ENCODE measurements at regions of chr18 and their contacts with region 1.

Region 1: DNA sequence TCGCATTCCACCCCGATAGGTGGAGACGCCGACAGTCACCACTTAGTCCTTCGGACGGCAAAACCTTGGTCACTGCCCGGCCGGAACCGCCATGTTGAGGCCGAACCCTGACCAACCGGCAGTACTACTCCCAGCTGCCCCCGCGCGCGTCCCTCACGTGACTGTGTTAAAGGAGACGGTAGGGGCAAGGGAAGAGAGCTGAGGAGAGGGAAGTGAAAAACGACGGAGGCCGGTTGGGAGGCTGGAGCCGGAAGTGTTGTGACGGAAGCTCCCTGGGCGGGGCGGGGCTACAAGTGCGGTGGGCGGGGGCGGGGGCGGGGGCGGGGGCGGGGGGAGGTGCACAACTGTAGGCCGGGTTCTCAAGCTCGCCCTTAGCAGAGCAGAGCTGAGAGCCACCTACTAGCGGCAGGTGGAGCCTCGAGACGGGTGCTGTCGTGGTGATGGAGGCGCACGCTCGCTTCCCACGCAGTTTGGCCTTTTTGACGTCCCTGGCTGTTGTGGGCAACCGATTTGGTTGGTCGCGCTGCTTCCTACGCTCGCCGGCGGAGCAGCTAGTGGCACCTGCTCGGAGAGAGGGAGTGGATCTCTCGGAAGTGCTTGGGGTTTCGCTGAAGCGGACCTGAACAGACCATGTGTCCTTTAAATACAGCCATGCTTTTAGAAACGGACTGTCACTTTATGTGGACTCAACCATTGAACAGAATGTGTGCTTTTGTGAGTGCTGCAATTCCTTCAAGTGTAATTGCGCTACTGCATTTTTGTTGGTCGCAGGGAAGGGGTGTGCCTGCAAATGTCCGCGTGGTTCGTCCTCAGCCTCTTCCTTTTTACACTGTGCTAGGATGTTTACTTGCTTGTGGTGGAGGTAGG is at the start of gene TRAPPC8:
- DNase-seq: peak; percentile 99
- total RNA-seq, gene TRAPPC8: 34.1 to 46.3 TPM

Region 2: DNA sequence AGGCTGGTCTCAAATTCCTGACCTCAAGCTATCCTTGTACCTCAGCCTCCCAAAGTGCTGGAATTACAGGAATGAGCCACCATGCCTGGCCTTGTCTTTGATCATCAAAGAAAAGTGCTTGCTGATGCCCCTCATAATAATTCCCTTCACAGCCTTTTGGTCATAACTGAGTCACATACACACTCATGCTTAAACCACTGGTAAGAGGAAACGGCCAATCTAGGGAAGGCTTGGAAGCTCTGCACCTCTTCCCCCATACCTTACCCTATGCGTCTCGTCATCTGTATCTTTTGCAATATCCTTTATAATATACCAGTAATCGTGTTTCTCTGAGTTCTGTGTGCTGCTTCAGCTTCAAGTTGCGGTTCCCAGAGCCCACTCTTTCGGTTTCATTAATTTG is 143.6 kb after region 1 on chr18:
- intact Hi-C with region 1: loop called in 1 of 2 experiments (anchors 10 kb)
- DNase-seq: no peak

Measured in posterior vena cava (tissue), 2 donors.